A549 (cell line): ENCODE measurements at regions of chr3 and their contacts with region 1.

Region 1: DNA sequence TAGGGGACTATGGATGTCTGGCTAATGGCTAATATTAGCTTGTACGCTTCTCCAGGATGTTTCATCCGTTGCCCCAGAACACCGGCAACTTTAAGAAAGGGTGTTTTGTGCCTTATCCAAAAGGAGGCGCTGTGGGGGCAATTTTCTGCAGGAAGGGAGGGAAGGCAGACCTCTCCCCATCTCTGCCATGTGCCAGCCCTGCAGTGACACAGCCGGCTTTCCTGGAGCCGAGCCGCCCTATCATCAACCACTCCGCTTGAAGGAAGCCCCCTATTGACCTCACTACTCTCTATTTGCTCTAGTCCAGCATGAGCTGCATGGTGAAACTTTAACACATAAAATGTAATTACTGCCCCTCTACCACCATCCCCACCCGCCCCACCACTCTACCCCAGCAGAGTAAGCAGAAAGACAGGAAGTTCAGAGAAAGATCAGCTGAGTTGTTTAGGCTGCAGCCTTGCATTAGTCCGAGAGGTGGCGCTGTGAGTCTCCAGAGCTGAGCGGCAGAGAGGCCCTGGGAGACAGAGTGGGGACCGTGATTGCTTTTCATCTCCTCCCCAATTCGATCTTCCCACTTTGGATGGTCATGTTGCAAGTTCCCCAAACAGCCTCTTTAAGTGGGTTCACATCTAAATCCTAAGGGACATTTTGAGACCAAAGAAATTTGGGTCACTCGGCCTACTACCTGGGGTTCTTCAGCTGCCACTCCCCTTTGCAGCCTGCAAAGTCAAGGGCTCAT is 24.5 kb upstream of the RAD18 start:
- DNase-seq: peak; percentile 53 to 71
- ATAC-seq: peak; percentile 72 to 92; a peak in 5 of 6 replicates
- H3K4me3 ChIP-seq: no peak overlapping the region
- H3K27ac ChIP-seq: no peak overlapping the region
- H3K4me1 ChIP-seq: no peaks in the 10 kb centered on the region
- CTCF ChIP-seq: peak; percentile 65
- EP300 ChIP-seq: no peak
- POLR2A ChIP-seq: no peak
- RAD21 ChIP-seq: peak; percentile 63 to 78

Region 2: DNA sequence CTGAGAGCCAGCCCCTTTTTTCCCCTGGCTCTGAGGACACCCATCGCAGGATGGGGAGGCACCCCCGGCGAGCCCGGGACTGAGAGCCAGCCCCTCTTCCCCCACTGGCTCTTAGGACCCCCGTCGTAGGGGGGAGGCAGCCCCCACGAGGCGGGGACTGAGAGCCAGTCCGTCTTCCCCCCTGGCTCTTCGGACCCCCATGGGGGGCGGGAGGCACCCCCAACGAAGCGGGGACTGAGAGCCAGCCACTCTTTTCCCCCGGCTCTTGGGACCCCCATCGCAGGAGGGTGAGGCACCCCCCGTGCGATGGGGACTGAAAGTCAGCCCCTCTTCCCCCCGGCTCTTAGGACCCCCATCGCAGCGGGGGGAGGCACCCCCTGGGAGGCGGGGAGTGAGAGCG is 306.5 kb before region 1 on chr3:
- CTCF ChIA-PET with region 1: no interaction called
- POLR2A ChIA-PET with region 1: no interaction called
- DNase-seq: no peak
- ATAC-seq: no peak
- H3K4me3 ChIP-seq: no peak overlapping the region
- H3K27ac ChIP-seq: peak overlapping the region; percentile 45 to 82; a peak in 4 of 6 replicates
- H3K4me1 ChIP-seq: peaks cover 31% of the 10 kb centered on the region
- CTCF ChIP-seq: no peak
- EP300 ChIP-seq: no peak
- POLR2A ChIP-seq: no peak
- RAD21 ChIP-seq: no peak

Region 3: GRCh38 chr3:8970971-8971589 is 16.7 kb before region 1 on chr3:
- CTCF ChIA-PET with region 1: interaction called, 75 read pairs
- POLR2A ChIA-PET with region 1: no interaction called
- DNase-seq: peak; percentile 63 to 65
- ATAC-seq: peak; percentile 59 to 83; a peak in 4 of 6 replicates
- H3K4me3 ChIP-seq: no peak overlapping the region
- H3K27ac ChIP-seq: no peak overlapping the region
- H3K4me1 ChIP-seq: no peaks in the 10 kb centered on the region
- CTCF ChIP-seq: peak; percentile 97
- EP300 ChIP-seq: no peak
- POLR2A ChIP-seq: no peak
- RAD21 ChIP-seq: peak; percentile 92 to 96

Region 4: DNA sequence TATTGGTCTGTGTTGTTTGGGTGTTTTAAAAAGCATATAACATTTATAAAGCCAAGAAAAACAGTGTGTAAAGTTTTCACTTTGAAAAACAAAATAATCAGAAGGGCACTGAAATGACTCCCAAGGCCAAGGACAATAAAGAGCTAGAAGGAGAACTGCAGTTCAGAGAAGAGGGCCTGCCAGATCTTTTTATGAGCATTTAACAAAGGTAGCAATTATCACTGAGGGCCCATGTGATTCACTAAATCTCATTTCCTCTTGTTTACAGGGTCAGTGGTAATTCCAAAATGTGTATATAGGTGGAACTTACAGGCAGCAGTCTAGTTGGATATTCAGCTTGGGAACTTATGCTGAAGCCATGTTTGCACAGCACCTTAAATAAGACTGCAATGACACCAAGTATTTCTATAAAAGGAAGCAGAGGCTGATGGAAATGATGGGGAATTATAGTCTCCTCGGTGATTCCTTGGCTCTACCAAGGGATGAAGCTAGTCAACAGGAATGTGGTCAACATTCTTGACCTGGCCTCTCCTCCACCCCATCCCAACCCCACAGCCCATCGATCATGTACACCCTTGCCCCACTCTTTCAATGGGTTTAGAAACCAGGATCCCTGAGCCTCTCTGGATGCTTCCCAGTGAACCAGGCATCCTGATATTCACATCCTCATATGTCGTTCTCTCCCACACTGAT is 320.6 kb after region 1 on chr3:
- CTCF ChIA-PET with region 1: interaction called, 86 read pairs
- POLR2A ChIA-PET with region 1: no interaction called
- DNase-seq: no peak
- ATAC-seq: no peak
- H3K4me3 ChIP-seq: no peak overlapping the region
- H3K27ac ChIP-seq: no peak overlapping the region
- H3K4me1 ChIP-seq: no peaks in the 10 kb centered on the region
- CTCF ChIP-seq: no peak
- EP300 ChIP-seq: no peak
- POLR2A ChIP-seq: no peak
- RAD21 ChIP-seq: no peak

Region 5: DNA sequence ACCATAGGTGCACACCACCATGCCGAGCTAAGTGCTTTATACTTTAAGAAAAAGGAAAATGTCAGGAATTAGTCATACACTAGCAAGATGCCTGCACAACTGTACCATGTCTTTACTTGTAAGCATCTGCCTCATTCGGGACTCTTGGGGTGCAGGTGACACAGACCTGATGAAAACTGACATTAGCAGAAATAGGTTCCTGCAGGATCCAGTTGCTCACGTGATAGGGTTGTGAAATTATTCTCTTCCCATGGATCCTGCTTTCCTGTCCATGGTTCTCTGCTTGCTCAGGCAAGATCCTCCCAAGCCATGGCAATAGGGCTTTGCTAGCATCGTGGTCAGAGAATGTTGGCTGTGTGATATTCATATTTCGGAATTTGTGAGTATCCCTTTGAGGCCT is 576.0 kb after region 1 on chr3:
- CTCF ChIA-PET with region 1: no interaction called
- POLR2A ChIA-PET with region 1: no interaction called
- DNase-seq: no peak
- ATAC-seq: no peak
- H3K4me3 ChIP-seq: no peak overlapping the region
- H3K27ac ChIP-seq: no peak overlapping the region
- H3K4me1 ChIP-seq: no peaks in the 10 kb centered on the region
- CTCF ChIP-seq: no peak
- EP300 ChIP-seq: no peak
- POLR2A ChIP-seq: no peak
- RAD21 ChIP-seq: no peak